Posterior cingulate gyrus (tissue), 11 donors: ENCODE measurements at regions of chr16 and their contacts with region 1.

Region 1: DNA sequence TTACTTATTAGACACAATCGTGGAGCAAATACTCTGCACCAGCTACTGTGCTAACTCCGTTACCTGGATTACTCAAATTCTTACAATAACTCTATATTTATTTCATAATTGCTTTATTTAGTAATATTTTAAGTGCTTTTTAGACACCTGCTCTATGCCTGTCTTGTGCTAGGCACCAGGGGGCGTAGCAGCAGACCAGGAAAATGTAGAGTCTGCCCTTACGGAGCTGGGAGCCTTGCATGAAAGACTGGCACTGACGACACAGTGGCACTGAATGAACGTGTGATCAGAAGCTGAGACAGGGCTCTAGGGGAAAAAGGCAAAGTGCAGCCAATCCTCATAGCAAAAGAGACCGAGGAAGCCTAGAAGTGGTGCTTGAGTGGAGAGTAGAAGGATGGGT is 486.5 kb downstream of the CDH13 start:
- DNase-seq: peak in 8 of 10 donors; percentile 53 to 95 (median 62)

Region 2: GRCh38 chr16:83147244-83147643 is 33.9 kb after region 1 on chr16:
- intact Hi-C with region 1: no loop called
- DNase-seq: no peak

Region 3: GRCh38 chr16:83176802-83177201 is 63.5 kb after region 1 on chr16:
- intact Hi-C with region 1: loop called (anchors 5 kb)
- DNase-seq: peak in 1 of 10 donors; percentile 24

Region 4: DNA sequence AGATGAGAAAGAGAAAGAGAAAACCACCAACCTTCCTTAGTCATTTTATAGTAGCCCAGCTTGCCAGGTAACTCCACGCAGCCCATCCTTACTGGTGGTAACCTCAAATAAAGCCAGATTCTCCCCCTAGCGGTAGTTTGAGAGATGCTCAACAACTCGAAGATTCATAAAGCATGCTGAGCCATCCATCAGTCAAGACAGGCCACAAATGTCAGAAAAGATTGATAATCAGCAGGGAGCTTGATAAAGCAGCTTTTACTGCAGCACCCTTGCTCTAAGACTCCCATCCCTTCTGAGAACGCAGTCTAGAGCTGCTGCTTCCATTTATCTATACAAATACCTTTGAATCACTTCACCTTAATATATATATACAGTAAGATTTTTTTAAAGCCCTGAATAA is 242.9 kb after region 1 on chr16:
- intact Hi-C with region 1: loop called (anchors 5 kb)
- DNase-seq: peak in 1 of 10 donors; percentile 40

Region 5: DNA sequence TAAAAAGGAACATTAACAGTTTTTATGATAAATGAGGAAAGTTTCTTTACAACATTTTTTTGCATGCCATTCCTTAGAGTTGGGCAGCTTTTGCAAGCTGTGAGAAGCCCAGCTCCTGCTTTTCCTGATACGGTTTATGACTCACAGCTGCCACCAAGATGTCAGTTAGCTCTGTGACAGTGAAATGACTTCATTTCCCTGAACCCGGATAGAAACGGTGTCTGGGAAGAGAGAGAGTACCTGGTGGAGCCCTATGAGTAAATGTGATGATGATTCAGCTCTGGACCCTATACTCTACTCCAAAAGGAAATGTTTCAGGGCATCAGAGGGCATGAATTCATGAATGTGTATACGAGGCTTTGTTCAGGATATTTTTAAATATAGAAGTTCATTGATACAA is 328.2 kb after region 1 on chr16:
- intact Hi-C with region 1: loop called (anchors 10 kb)
- DNase-seq: no peak